Left colon (tissue), 2 donors: ENCODE measurements at regions of chr9 and their contacts with region 1.

Region 1: DNA sequence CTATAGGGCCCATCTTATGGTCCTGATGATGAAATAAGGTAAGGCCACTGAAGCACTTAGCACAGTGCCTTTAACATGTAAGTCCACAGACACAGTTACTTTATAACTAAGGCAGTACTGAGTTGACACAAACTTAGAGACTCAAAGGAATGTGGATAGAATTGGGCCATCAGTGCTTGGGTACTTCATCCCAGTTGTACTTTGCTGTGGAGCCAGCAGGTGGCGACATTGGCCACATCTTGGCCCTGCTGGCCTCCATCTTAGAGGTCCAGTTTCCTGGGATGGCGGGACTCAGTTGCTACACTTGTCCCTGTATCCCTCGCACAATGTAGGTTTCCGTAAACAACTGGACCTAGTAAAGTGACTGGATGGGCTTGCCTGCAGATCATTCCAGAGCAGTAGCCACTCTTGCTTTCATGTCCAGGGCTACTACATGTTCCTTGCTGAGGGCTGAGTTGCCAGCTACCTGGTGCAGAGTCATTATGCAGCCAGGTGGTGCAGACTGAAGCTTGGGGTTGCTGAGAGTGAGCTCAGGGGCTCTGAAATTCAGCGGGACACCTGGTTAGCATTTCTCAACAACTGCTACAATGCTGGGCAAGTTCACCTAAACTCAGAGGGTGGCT is 10.6 kb downstream of the MTAP start:
- DNase-seq: peak; percentile 48 to 76
- ATAC-seq: peak; percentile 91

Region 2: DNA sequence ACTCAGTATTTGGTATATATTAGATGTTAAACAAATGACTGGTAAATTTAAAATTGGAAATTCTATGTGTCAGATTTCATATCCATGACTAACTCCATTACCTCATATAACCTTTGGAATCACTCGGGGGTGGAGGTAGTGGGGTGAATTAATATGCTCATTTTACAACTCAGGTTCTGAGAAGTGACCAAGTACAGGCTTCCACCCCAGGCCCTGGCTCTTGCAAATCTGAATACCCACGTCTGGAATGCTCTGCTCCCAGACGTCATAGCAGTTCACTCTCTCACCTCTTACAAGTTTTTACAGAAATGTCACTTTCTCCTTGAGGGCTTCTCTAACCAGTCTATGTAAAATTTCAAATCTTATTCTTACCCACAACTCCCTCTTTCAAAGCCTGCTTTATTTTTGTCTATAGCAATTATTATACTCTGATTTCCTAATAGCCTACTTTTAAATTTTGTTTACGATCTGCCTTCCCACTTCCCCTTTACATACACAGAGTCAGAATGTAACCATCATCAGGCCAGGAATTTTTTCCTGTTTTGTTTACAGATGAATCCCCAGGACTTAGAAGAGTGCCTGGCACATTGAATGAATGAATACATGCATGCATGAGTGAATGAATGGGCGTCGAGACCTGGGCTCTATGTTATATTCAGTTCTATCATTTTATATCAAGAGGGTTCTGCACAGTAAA is 196.8 kb before region 1 on chr9:
- intact Hi-C with region 1: no loop called
- DNase-seq: no peak
- ATAC-seq: no peak

Region 3: DNA sequence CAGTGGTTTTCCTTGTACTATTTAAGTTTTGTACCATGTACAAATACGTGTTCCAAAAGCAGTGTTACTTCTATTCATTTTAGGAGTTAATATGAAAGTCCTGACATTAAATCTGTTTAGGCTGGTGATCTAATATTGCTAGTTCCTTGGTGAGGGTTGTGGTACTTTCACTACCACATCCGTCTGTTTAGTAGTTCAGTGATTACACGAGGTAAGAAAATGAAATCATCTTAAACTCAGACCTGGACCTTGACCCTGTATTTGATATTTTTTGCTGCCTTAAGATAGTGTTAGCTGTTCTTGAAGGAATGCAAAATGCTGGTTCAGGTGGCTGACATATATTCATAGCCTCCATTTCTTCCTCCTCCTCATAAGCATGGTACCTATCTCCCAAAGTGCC is 39.7 kb after region 1 on chr9:
- intact Hi-C with region 1: no loop called
- DNase-seq: no peak
- ATAC-seq: peak; percentile 76

Region 4: DNA sequence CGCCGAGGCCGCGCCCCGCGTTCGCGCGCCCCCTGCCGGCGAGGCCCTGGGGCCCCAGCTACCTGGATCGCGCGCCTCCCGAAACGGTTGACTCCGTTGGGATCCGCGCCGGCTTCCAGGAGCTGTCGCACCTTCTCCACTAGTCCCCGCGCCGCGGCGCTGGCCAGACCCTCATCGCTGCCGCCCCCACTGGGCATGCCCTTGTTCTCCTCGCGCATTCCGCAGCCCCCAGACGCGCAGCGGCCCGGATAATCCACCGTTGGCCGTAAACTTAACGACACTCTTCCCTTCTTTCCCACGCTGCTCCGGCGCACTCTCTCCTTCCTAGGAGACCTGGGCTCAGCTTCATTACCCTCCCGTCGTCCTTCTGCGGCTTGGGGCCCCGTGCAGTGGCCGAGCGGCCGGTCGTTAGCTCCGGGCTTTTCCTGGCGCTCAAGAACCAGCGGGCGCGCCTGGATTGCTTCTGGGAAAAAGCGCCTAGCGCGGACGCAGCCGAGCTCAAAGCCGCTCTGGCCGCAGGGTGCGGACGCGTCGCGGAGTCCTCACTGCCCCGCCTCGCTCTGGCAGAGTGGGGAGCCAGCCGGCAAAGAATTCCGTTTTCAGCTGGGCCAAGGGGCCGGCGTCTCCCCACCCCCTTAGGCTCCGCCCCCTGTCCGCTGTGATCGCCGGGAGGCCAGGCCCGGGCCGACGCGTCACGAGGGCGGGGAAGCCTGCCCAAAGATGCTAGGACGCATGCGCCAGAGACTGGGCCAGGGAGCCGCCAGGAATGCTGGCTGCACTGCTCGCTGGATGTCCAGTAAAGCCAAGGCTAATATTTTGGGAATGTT is 195.9 kb after region 1 on chr9 and contains the start of gene CDKN2B:
- intact Hi-C with region 1: loop called in 1 of 2 experiments (anchors 5 kb)
- DNase-seq: peak; percentile 96 to 97
- ATAC-seq: peak; percentile 94
- total RNA-seq, gene CDKN2B: 158 to 160 TPM

Region 5: GRCh38 chr9:22238809-22239684 is 426.0 kb after region 1 on chr9:
- intact Hi-C with region 1: loop called (anchors 5 to 10 kb)
- DNase-seq: no peak
- ATAC-seq: peak; percentile 62